ENCODE measurements at regions of chr18 and their contacts with region 1.

Region 1: DNA sequence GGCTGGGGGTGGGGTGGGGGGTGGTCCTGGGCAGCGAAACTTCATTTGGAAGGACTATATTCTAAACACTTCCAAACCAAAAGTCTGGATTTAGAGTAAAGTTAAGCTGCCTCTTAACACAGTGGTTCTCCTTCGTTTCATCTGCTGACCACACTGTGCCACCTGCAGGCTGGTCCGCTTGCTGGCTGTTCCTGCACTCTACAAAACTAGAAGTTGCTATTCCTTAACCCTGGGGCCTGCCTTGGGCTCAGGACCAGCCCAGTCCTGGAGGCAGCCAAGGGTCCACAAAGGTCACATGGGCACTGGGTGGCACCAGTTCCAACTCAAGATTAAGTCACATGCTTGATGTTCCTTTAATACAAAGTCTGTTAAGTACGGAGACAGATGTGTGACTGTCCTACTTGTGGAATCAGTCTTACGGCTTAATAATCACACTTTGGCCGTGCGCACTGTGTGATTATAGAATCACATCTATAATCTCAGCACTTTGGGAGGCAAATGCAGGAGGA is 195.4 kb downstream of the FAM210A start:
- DNase-seq: no peak
- H3K4me3 ChIP-seq: no peak overlapping the region
- H3K27ac ChIP-seq: no peak overlapping the region
- H3K4me1 ChIP-seq: peaks cover 0 to 7% (median 0%) of the 10 kb centered on the region in 3 donors
- H3K27me3 ChIP-seq: no peaks in the 10 kb centered on the region
- CTCF ChIP-seq: peak in 5 of 6 experiments; percentile 16 to 39 (median 29)
- POLR2A ChIP-seq: no peak

Region 2: GRCh38 chr18:13216092-13216582 is 314.8 kb before region 1 on chr18:
- intact Hi-C with region 1: loop called (anchors 10 kb)
- DNase-seq: no peak
- H3K4me3 ChIP-seq: peak overlapping the region in 2 of 4 donors; percentile 77 to 80
- H3K27ac ChIP-seq: peak overlapping the region in 2 of 4 donors; percentile 87 to 90
- H3K4me1 ChIP-seq: peaks cover 3 to 50% (median 10%) of the 10 kb centered on the region in 3 donors
- H3K27me3 ChIP-seq: peaks cover 0 to 82% (median 0%) of the 10 kb centered on the region in 4 donors
- CTCF ChIP-seq: peak; percentile 37 to 68 (median 61)
- POLR2A ChIP-seq: peak in 1 of 4 donors; percentile 36

Region 3: DNA sequence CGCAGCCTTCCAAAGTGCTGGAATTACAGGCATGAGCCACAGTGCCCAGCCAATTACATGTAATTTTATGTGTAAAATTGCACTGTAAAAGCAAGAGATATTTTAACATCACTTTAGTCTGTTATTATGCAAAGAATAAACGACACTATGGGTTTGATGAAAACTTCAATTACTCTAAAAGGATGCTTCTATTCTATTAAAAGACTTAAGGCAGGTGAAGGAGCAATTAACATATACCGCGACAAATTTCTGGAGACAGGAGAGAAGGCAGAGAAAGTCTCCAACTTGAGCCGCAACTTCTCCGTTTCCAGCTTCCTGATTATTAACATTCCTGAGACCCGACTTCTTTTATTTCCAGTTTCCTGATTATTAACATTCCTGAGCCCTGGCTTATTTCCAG is 141.7 kb after region 1 on chr18:
- intact Hi-C with region 1: no loop called
- DNase-seq: no peak
- H3K4me3 ChIP-seq: no peak overlapping the region
- H3K27ac ChIP-seq: no peak overlapping the region
- H3K4me1 ChIP-seq: no peaks in the 10 kb centered on the region
- H3K27me3 ChIP-seq: no peaks in the 10 kb centered on the region
- CTCF ChIP-seq: no peak
- POLR2A ChIP-seq: no peak